ENCODE measurements at regions of chr11 and their contacts with region 1.

Region 1: GRCh38 chr11:64304316-64305072 is 830 bp upstream of the ESRRA start:
- DNase-seq: peak; percentile 96
- H3K4me3 Mint-ChIP-seq: peak overlapping the region; percentile 100
- H3K27ac Mint-ChIP-seq: peak overlapping the region; percentile 50
- H3K4me1 Mint-ChIP-seq: peaks cover 31% of the 10 kb centered on the region
- H3K27me3 Mint-ChIP-seq: peaks cover 16% of the 10 kb centered on the region
- CTCF ChIP-seq: peak; percentile 58

Region 2: DNA sequence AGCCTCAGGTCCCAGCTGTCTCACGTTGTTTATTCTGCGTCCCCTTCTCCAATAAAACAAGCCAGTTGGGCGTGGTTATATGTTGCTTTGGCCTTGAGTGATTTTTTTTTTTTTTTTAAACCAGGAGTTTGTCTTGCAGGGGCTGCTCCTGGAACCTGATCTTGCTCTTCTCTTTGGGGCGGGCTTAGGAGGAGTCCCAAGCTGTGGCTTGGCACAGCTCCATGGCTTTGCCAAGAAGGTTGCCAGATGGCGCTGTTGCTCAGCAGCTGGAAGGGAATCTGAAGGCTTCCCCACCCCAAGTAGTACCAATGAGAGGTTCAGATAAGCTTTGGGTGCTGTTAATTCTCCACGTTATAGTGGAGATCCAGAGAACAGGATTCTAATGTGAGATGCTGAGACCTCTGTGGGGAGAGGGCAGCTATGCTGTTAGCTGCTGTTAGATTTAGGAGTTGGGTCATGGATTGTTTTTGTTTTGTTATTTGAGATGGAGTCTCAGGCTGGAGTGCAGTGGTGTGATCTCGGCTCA is 100.0 kb before region 1 on chr11:
- CTCF ChIA-PET with region 1: interaction called, 15 read pairs
- intact Hi-C with region 1: no loop called
- DNase-seq: peak; percentile 78
- H3K4me3 Mint-ChIP-seq: no peak overlapping the region
- H3K27ac Mint-ChIP-seq: peak overlapping the region; percentile 31
- H3K4me1 Mint-ChIP-seq: peaks cover 9% of the 10 kb centered on the region
- H3K27me3 Mint-ChIP-seq: no peaks in the 10 kb centered on the region
- CTCF ChIP-seq: peak; percentile 12

Region 3: DNA sequence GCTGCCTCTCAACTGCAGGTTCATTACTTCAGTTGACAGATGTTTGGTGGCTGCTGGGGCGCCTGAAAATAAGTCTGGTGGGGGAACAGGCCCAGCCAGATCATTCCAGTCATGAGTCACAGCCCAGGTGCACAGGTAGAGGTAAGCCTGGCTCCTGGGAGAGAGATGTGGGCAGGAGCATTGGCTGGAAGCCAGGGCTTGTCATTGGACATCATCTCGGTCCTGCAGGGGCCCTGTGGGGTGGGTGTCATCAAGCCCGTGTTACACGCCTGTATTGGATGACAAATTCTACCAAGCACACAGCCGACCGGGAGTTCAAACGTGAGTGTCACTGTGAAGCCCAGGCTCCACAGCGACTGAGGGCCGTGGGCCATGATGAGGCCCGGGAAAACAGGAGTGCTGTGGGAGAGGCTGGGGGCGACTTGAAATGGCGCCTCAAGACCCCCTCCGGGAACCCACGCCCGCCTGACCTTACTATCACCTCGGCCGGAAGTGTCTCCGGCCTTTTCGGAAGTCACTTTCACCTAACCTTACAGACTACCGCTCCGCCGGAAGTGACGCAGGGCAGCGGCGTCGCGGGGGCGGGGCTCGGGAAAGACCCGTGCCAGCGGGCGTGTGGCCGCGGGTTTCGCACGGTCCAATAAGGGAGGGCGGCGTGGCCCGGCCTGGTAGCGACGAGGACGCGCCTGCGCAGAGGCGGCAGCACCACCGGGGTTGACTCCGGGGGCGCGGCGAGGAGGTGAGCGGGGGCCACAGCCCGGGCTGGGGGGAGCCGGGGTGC is 63.9 kb before region 1 on chr11 and contains the start of gene FKBP2:
- CTCF ChIA-PET with region 1: interaction called, 6 read pairs
- intact Hi-C with region 1: loop called (anchors 10 kb)
- DNase-seq: peak; percentile 98
- H3K4me3 Mint-ChIP-seq: peak within 1 kb of the TSS; percentile 96
- H3K27ac Mint-ChIP-seq: peak within 1 kb of the TSS; percentile 89
- H3K4me1 Mint-ChIP-seq: peaks cover 42% of the 10 kb centered on the region
- H3K27me3 Mint-ChIP-seq: no peaks in the 10 kb centered on the region
- CTCF ChIP-seq: no peak
- total RNA-seq, gene FKBP2: 87.4 and 91.3 TPM in 2 replicates

Region 4: GRCh38 chr11:64269380-64270234 is 34.9 kb before region 1 on chr11:
- CTCF ChIA-PET with region 1: interaction called, 17 read pairs
- intact Hi-C with region 1: loop called (anchors 2 kb)
- DNase-seq: peak; percentile 97
- H3K4me3 Mint-ChIP-seq: peak overlapping the region; percentile 94
- H3K27ac Mint-ChIP-seq: peak overlapping the region; percentile 97
- H3K4me1 Mint-ChIP-seq: peaks cover 18% of the 10 kb centered on the region
- H3K27me3 Mint-ChIP-seq: no peaks in the 10 kb centered on the region
- CTCF ChIP-seq: no peak

Region 5: DNA sequence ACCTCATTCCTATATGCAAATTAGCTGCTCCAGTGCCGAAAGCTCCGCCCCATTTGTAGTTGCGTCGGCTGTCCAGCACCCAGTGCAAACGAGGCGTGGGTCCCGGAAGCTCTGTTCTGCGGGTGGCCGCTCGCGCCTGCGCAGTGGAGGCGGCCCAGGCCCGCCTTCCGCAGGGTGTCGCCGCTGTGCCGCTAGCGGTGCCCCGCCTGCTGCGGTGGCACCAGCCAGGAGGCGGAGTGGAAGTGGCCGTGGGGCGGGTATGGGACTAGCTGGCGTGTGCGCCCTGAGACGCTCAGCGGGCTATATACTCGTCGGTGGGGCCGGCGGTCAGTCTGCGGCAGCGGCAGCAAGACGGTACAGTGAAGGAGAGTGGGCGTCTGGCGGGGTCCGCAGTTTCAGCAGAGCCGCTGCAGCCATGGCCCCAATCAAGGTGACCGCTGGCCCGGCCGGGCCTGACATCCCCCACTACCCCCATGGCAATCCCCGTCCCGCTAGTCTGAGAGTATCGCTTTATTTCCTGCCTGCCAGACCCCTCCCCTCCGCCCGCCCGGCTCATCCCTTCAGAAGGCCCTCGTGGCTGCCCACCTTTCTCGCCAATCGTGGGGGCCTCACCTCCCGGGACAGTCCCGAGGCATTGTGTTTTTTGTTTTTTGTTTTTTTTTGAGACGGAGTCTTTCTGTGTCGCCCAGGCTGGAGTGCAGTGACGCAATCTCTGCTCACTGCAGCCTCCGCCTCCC is 13.6 kb after region 1 on chr11 and contains the start of gene PRDX5:
- CTCF ChIA-PET with region 1: interaction called, 16 read pairs
- intact Hi-C with region 1: no loop called
- DNase-seq: peak; percentile 97
- H3K4me3 Mint-ChIP-seq: peak within 1 kb of the TSS; percentile 98
- H3K27ac Mint-ChIP-seq: peak within 1 kb of the TSS; percentile 99
- H3K4me1 Mint-ChIP-seq: peaks cover 29% of the 10 kb centered on the region
- H3K27me3 Mint-ChIP-seq: no peaks in the 10 kb centered on the region
- CTCF ChIP-seq: no peak
- total RNA-seq, gene PRDX5: 165 TPM in 2 replicates

Region 6: DNA sequence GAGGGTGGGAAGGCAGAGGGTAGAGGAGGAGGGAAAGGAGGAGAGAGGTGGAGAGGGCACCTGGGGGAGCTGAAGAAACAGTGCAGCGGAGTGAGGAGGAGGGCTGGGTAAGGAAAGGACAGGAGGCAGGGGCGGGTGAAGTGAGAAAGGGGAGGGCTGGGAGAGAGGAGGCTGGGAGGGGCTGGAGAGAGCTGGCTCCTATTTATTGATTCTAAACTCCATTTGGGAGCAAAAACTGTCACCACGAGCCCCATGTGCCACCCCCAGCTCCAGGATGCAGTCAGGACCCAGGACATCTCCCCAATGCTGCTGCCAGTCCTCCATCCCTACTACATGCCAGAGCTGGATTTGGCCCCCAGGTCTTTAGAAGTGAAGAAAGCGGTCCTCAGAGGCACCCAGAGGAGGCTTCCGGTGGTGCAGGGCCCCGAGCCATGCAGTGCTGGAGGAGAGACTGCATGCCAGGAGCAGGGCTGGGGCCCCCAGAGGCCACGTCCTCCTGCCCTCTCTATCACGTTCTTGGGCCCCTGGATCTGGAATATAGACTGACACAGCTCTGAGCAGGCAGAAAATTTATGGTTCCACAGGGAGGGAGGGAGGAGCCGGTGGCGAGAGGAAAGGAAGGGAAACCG is 340.3 kb after region 1 on chr11:
- CTCF ChIA-PET with region 1: no interaction called
- intact Hi-C with region 1: no loop called
- DNase-seq: no peak
- H3K4me3 Mint-ChIP-seq: no peak overlapping the region
- H3K27ac Mint-ChIP-seq: no peak overlapping the region
- H3K4me1 Mint-ChIP-seq: no peaks in the 10 kb centered on the region
- H3K27me3 Mint-ChIP-seq: peaks cover 66% of the 10 kb centered on the region
- CTCF ChIP-seq: no peak